GM10248 (cell line): ENCODE measurements at regions of chr22 and their contacts with region 1.

Region 1: DNA sequence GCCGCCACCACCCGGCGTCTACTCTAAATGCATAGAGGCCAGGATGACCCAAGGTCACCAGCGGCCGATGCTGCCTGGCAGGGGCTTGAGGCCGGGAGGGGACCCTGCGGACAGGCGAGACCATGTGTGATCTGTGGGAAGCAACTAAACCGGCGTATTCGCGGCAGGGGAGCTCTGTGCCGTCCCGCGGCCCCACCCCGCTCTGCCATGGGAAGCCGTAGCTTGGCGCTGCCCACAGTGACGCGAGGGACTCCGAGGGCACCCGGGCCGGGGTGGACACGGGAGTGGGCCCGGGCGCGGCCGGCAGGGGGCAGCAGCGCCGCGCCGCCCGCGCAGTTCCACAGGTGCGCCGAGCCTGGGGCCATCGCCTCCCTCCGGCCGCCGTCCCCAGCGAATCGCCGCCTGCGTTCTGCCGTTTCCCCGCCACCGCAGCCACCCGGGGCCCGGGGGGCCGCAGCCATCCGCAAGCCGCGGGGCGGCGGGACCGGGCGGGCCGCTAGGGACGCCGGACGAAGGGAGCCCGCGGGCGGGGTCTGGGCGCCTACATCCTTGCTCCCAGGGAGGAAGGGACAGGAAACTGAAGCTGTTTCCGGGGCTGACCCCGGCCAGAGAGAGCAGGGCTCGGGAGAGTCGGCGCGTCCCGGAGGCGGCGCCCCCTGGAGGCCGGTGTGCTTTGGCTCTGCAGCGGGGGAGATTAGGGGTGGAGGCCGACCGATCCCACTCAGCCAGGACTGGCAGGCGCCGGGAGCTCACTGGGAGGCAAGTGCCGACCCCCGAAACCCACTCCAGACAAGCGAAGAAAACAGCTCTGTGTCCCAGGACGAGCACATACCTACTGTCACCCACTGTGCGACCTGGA is 12.5 kb upstream of the HDHD5 start:
- DNase-seq: peak; percentile 94
- CTCF ChIP-seq: peak; percentile 91

Region 2: DNA sequence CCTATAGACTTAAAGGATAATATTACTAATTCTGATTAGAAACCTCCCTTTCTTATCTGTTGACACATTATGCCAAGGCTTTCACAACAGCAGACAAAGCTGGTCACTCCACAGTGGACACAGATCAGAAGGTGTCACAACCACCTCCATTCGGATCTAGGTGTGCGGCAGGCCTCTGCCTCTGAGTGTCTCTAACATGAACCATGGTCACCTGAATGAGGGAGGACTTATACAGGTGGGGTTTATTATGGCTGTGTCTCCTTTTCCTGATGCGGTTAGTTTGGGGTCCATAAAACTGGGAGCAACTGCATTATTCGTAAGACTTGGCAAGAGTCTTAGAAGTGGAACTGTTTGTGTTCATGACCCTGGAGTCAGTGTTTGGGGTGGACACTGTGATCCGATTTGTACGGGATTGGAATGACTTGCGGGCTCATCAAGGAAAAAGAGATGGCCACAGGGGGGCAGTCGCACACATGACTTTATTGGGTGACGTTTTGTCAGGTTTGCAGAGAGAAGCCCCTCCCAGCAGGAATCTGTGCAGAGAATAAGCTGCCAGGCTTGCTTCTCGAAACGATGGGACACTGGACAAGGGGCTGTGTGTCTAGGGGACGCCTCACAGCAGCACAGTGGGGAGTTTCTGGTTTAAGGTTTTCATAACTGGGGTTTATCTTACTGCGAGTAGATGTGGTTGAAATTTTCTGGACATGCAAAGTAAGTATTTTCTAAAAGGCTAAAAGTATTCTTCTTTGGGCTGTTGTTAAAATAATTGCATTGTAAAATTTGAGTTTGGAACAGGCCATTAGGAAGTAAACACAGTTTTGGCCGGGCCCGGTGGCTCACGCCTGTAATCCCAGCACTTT is 254.2 kb before region 1 on chr22:
- CTCF ChIA-PET with region 1: interaction called, 13 read pairs
- POLR2A ChIA-PET with region 1: no interaction called
- DNase-seq: peak; percentile 65
- CTCF ChIP-seq: peak; percentile 54

Region 3: GRCh38 chr22:17131686-17132085 is 39.9 kb before region 1 on chr22:
- CTCF ChIA-PET with region 1: interaction called, 11 read pairs
- POLR2A ChIA-PET with region 1: no interaction called
- DNase-seq: no peak
- CTCF ChIP-seq: no peak

Region 4: DNA sequence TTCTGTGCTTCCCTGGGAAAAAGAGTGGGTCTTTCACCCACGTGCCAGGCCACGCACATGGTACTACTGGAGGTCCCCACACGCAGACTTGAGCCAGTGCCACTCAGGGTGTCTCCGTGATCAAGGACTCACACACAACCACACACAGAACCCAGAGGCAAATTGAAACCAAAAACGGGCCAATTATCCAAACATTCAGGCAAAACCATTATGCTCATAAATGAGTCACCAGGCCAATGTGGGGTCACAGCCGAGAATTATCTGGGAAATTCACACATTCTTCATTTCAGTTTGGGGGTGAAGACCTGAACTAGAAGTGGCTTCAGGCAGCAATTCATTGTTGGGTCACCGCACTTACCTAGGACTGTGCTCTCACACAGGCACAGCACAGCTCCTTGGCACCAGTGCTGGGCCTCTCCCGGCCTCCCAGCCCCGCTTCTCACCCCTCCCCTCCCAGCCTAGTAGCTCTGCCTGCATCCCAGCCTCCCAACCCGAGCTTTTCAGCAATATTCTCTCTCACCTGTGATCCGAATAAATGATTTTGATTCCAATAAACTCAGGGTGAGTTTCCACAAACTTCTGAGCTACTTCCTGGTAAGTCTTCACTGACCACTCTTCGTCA is 19.7 kb after region 1 on chr22:
- CTCF ChIA-PET with region 1: interaction called, 99 read pairs
- POLR2A ChIA-PET with region 1: no interaction called
- DNase-seq: no peak
- CTCF ChIP-seq: no peak

Region 5: DNA sequence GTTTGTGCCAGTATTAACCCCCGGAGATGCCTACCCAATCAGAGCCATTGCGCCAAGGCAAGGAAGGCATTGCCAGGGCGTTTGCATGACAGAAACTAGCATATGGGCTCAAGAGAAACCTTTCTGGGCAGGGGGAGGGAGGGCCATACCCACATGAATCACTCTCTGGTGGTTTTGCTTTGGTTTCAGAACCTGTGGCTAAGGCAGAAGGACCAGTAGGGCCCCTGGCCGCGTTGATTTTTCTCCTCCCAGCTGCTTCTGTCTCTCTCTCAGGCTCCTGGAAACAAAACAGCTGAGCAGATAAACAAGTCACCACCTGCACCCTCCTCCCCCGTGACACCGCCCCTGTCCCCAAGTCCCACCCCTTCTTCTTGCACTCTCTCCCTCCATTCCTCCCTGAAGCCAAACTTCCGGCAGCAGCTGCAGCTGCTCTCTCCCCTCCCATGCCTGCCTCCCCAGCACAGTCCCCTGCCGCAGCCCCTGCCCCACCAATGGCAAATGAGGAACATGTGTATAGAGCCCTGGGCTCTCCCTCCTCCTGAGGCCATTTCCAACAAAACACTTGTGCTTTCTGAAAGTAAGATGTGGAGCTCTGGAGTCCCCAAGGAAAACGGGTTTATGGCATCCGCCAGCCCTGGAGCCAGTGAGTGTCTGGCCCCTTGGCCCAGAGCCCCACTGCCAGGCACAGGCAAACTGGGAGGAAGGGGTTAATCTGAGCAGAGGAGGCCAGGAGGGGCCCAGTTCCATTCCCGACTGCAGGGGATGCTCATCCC is 86.7 kb after region 1 on chr22:
- CTCF ChIA-PET with region 1: interaction called, 29 read pairs
- POLR2A ChIA-PET with region 1: no interaction called
- DNase-seq: peak; percentile 86
- CTCF ChIP-seq: no peak

Region 6: GRCh38 chr22:17366830-17367229 is 195.3 kb after region 1 on chr22:
- CTCF ChIA-PET with region 1: interaction called, 10 read pairs
- POLR2A ChIA-PET with region 1: no interaction called
- DNase-seq: peak; percentile 41
- CTCF ChIP-seq: peak; percentile 15

Region 7: DNA sequence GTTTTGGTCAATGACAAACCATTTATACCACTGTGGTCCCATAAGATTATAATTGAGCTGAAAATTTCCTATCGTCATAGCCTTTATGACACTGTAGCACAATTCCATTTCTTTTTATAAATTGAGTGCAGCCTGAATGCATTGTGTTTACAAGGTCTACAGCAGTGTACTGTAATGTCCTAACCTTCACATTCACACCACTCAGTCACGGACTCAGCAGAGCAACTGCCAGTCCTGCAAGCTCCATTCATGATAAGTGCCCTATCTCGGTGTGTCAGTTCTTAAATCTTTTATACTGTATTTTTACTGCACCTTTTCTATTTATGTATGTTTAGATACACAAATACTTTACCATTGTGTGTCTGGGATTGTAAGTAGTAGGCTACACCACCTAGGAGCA is 336.6 kb after region 1 on chr22:
- CTCF ChIA-PET with region 1: interaction called, 186 read pairs
- POLR2A ChIA-PET with region 1: no interaction called
- DNase-seq: no peak
- CTCF ChIP-seq: no peak

Region 8: GRCh38 chr22:17712441-17712840 is 540.9 kb after region 1 on chr22:
- CTCF ChIA-PET with region 1: no interaction called
- POLR2A ChIA-PET with region 1: no interaction called
- DNase-seq: no peak
- CTCF ChIP-seq: no peak